Endothelial cell of umbilical vein (primary cell): ENCODE measurements at regions of chr13 and their contacts with region 1.

Region 1: DNA sequence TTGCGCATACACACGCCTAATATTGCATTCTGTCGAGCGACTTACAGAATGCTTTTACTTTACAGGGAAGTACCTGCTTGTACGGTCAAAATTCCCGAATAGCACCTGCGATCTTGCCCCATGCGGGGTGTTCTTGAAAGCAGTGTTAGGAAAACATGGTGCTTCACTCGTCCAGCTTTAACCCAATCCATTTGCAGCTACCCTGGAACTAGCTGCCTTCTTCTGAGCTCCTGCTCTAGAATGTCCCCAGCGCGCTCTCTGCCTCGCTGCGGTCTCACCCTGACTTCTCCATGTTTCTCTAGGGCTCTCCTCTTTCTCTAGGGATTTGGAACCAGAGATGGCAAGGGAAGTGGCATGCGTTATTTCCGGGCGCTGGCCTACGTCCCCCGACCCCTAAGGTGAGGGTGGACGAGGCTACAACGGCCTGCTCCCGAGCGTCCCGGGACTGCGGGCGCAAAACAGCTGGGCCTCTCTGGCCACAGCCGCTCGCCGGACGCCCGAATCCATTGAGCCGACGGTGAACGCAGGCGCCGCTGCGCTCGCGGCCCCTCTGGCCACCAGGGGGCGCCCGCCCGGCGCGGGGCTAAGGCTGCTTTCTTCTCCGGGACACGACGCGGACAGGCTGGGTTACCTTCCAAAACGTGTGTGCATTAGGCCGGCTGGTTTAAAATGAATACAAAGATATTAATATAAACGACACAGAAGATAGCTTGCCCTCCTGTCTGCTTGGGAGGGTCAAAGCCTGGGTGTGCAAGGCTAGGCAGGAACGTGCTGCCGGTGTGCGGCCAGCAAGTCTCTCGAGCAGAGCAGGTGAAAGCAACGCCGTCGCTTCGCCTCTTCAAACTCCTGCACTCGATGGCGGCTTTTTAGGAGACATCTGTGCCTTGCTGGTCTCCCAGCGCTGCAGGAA is 1.8 kb upstream of the SPRY2 start:
- DNase-seq: peak; percentile 83
- H3K4me3 ChIP-seq: peak overlapping the region; percentile 30 to 77 (median 75)
- H3K27ac ChIP-seq: peak overlapping the region; percentile 82
- H3K4me1 ChIP-seq: peaks cover 17% of the 10 kb centered on the region
- H3K27me3 ChIP-seq: no peaks in the 10 kb centered on the region
- CTCF ChIP-seq: peak; percentile 97 to 98
- POLR2A ChIP-seq: no peak

Region 2: DNA sequence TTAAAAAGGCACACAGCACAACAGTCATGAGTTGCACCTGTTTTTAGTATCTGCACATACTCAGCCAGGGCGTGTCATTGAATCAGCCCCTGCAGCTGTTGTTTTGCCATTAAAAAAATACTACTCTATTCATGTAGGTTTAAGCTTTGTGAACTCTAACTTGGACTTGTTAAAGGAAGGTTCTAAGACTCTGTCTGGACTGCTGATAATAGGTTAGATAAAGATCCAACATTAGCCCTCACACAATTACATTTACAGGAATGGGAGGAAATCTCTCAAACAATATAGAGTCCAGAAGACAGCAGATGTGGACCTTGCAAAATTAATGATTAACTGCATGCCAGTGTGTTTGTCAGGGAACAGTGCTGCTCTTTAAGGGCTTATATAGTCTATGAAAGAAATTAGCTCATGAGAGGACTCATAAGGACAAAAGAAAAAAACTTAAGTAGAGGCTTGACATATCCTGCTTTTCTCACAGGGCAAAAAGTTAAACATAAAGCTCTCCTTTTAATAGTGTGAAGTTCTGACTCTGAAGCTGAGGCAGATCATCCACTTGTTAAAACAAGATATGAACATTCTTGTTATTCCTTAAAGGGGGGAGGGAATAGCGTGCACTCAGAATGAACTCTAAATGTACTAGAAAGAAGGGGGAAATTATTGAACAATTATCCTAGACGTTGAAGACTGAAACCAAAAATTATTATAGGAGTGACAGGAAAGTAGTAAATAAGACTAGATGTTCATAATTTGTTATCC is 618.2 kb before region 1 on chr13:
- CTCF ChIA-PET with region 1: interaction called, 3 read pairs
- POLR2A ChIA-PET with region 1: interaction called, 6 read pairs
- dilution Hi-C with region 1: no loop called
- intact Hi-C with region 1: loop called (anchors 5 kb)
- DNase-seq: peak; percentile 93
- H3K4me3 ChIP-seq: no peak overlapping the region
- H3K27ac ChIP-seq: peak overlapping the region; percentile 24
- H3K4me1 ChIP-seq: peaks cover 3% of the 10 kb centered on the region
- H3K27me3 ChIP-seq: no peaks in the 10 kb centered on the region
- CTCF ChIP-seq: no peak
- POLR2A ChIP-seq: no peak

Region 3: GRCh38 chr13:79936368-79937136 is 406.2 kb before region 1 on chr13:
- CTCF ChIA-PET with region 1: interaction called, 18 read pairs
- POLR2A ChIA-PET with region 1: interaction called, 27 read pairs
- dilution Hi-C with region 1: no loop called
- intact Hi-C with region 1: loop called (anchors 1 kb)
- DNase-seq: peak; percentile 100
- H3K4me3 ChIP-seq: peak overlapping the region in 1 of 3 experiments; percentile 6
- H3K27ac ChIP-seq: peak overlapping the region; percentile 99
- H3K4me1 ChIP-seq: peaks cover 62% of the 10 kb centered on the region
- H3K27me3 ChIP-seq: no peaks in the 10 kb centered on the region
- CTCF ChIP-seq: no peak
- POLR2A ChIP-seq: no peak

Region 4: GRCh38 chr13:80132741-80133601 is 209.8 kb before region 1 on chr13:
- CTCF ChIA-PET with region 1: interaction called, 5 read pairs
- POLR2A ChIA-PET with region 1: no interaction called
- dilution Hi-C with region 1: no loop called
- intact Hi-C with region 1: loop called (anchors 2 kb)
- DNase-seq: peak; percentile 84
- H3K4me3 ChIP-seq: peak overlapping the region in 1 of 3 experiments; percentile 21
- H3K27ac ChIP-seq: peak overlapping the region; percentile 32
- H3K4me1 ChIP-seq: peaks cover 23% of the 10 kb centered on the region
- H3K27me3 ChIP-seq: no peaks in the 10 kb centered on the region
- CTCF ChIP-seq: no peak
- POLR2A ChIP-seq: no peak

Region 5: GRCh38 chr13:80524447-80525215 is 181.9 kb after region 1 on chr13:
- CTCF ChIA-PET with region 1: interaction called, 3 read pairs
- POLR2A ChIA-PET with region 1: no interaction called
- dilution Hi-C with region 1: no loop called
- intact Hi-C with region 1: loop called (anchors 5 kb)
- DNase-seq: peak; percentile 55
- H3K4me3 ChIP-seq: no peak overlapping the region
- H3K27ac ChIP-seq: no peak overlapping the region
- H3K4me1 ChIP-seq: peaks cover 31% of the 10 kb centered on the region
- H3K27me3 ChIP-seq: no peaks in the 10 kb centered on the region
- CTCF ChIP-seq: no peak
- POLR2A ChIP-seq: no peak

Region 6: GRCh38 chr13:80955501-80955900 is 612.8 kb after region 1 on chr13:
- CTCF ChIA-PET with region 1: interaction called, 8 read pairs
- POLR2A ChIA-PET with region 1: interaction called, 4 read pairs
- dilution Hi-C with region 1: no loop called
- intact Hi-C with region 1: loop called (anchors 1 kb)
- DNase-seq: peak; percentile 82
- H3K4me3 ChIP-seq: no peak overlapping the region
- H3K27ac ChIP-seq: peak overlapping the region; percentile 48
- H3K4me1 ChIP-seq: peaks cover 35% of the 10 kb centered on the region
- H3K27me3 ChIP-seq: no peaks in the 10 kb centered on the region
- CTCF ChIP-seq: no peak
- POLR2A ChIP-seq: no peak